Activated T-helper 2 cell treated with anti-CD3 and anti-CD28 coated beads, Interferon-gamma antibody, Interleukin-2, Interleukin-4, amounts not matched to agents 10 μg/mL and 5 μg/mL and 100 μg/mL, durations not matched to agents 14 hours and 24 hours and 36 hours (primary cell): ENCODE measurements at regions of chr17 and their contacts with region 1.

Region 1: DNA sequence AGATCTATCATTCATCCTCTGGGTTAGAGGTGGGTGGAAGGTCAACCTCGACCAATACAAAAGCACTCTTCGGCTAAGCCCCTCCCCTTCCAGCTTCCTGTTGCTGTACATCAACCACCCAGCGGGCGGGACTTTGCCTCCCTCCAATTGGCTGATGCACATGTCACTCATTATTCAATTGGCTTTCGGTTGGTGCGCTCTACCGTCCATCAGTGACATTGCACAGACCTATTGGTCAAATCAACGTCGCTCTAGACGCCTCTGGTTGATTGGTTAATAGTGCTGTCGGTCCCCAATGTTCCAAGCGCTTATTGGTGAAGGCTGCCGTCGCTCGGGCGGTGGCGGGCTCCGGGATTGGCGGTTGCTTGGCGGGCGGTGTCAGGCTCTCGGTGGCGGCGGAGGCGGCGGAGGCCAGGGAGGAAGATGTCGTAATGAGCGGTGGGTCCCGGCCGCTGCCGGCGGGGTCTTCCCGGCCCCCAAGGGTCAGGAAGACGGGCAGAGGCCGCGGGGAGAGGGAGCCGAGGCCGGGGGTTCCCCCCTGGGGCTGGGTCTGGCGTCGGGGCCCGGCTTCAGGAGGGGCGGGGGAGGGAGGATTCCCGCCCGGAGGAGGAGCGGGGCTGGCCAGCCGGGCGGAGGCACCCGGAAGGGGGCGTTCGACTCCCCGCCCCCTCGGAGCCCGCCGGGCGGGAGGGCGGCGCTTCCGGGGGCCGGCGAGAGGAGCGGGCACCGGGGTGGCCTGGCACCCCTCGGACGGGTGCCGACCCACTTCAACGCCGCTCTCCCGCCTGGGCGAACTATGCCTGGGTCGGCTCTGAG is at the start of gene SP2:
- DNase-seq: peak; percentile 100
- H3K4me3 Mint-ChIP-seq: peak within 1 kb of the TSS; percentile 93
- H3K27ac Mint-ChIP-seq: peak within 1 kb of the TSS; percentile 93
- H3K4me1 Mint-ChIP-seq: peaks cover 28% of the 10 kb centered on the region
- H3K27me3 Mint-ChIP-seq: no peaks in the 10 kb centered on the region
- total RNA-seq, gene SP2: 16.5 and 19.7 TPM in 2 replicates

Region 2: GRCh38 chr17:47733047-47733673 is 162.9 kb before region 1 on chr17 and contains the start of gene TBX21:
- intact Hi-C with region 1: loop called (anchors 1 kb)
- DNase-seq: peak; percentile 82
- H3K4me3 Mint-ChIP-seq: peak within 1 kb of the TSS; percentile 100
- H3K27ac Mint-ChIP-seq: peak within 1 kb of the TSS; percentile 91
- H3K4me1 Mint-ChIP-seq: peaks cover 62% of the 10 kb centered on the region
- H3K27me3 Mint-ChIP-seq: no peaks in the 10 kb centered on the region
- total RNA-seq, gene TBX21: 40.4 and 40.6 TPM in 2 replicates

Region 3: DNA sequence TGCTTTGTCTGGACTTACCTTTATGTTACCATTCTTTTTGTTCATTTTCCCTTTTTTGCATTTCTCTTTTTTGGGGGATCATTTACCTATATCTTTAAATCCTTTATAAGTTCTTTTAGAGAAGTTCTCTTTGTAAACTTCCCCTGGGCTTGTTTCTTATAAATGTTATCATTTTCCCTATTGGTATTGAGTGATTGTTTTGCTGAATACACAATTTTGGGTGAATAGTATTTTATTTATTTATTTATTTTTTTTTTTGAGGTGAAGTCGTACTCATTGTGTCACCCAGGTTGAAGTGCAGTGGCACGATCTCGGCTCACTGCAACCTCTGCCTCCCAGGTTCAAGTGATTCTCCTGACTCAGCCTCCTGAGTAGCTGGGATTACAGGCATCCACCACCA is 144.6 kb before region 1 on chr17:
- intact Hi-C with region 1: no loop called
- DNase-seq: no peak
- H3K4me3 Mint-ChIP-seq: no peak overlapping the region
- H3K27ac Mint-ChIP-seq: no peak overlapping the region
- H3K4me1 Mint-ChIP-seq: no peaks in the 10 kb centered on the region
- H3K27me3 Mint-ChIP-seq: peaks cover 5% of the 10 kb centered on the region

Region 4: GRCh38 chr17:47840740-47841603 is 55.1 kb before region 1 on chr17 and contains the start of gene SCRN2:
- intact Hi-C with region 1: loop called (anchors 1 kb)
- DNase-seq: peak; percentile 87
- H3K4me3 Mint-ChIP-seq: peak within 1 kb of the TSS; percentile 94
- H3K27ac Mint-ChIP-seq: peak within 1 kb of the TSS; percentile 88
- H3K4me1 Mint-ChIP-seq: peaks cover 22% of the 10 kb centered on the region
- H3K27me3 Mint-ChIP-seq: peaks cover 19% of the 10 kb centered on the region
- total RNA-seq, gene SCRN2: 23.5 and 27.5 TPM in 2 replicates

Region 5: GRCh38 chr17:47941236-47941994 is 45.4 kb after region 1 on chr17 and contains the start of gene PNPO:
- intact Hi-C with region 1: loop called (anchors 2 kb)
- DNase-seq: peak; percentile 95
- H3K4me3 Mint-ChIP-seq: peak within 1 kb of the TSS; percentile 82
- H3K27ac Mint-ChIP-seq: peak within 1 kb of the TSS; percentile 90
- H3K4me1 Mint-ChIP-seq: peaks cover 37% of the 10 kb centered on the region
- H3K27me3 Mint-ChIP-seq: no peaks in the 10 kb centered on the region
- total RNA-seq, gene PNPO: 41.0 and 45.9 TPM in 2 replicates

Region 6: GRCh38 chr17:47949136-47949759 is 53.2 kb after region 1 on chr17:
- intact Hi-C with region 1: loop called (anchors 1 kb)
- DNase-seq: peak; percentile 75
- H3K4me3 Mint-ChIP-seq: peak overlapping the region; percentile 61
- H3K27ac Mint-ChIP-seq: peak overlapping the region; percentile 73
- H3K4me1 Mint-ChIP-seq: peaks cover 30% of the 10 kb centered on the region
- H3K27me3 Mint-ChIP-seq: no peaks in the 10 kb centered on the region

Region 7: GRCh38 chr17:47970704-47971463 is 74.8 kb after region 1 on chr17 and contains the start of gene CDK5RAP3:
- intact Hi-C with region 1: loop called (anchors 1 kb)
- DNase-seq: peak; percentile 99
- H3K4me3 Mint-ChIP-seq: peak within 1 kb of the TSS; percentile 95
- H3K27ac Mint-ChIP-seq: peak within 1 kb of the TSS; percentile 91
- H3K4me1 Mint-ChIP-seq: peaks cover 28% of the 10 kb centered on the region
- H3K27me3 Mint-ChIP-seq: peaks cover 1% of the 10 kb centered on the region
- total RNA-seq, gene CDK5RAP3: 192 and 199 TPM in 2 replicates